Activated naive CD4-positive, alpha-beta T cell treated with anti-CD3 and anti-CD28 coated beads for 36 hours (primary cell): ENCODE measurements at regions of chr7 and their contacts with region 1.

Region 1: GRCh38 chr7:117750612-117751563 is 122.4 kb downstream of the CTTNBP2 start:
- DNase-seq: no peak
- H3K4me3 Mint-ChIP-seq: no peak overlapping the region
- H3K27ac Mint-ChIP-seq: no peak overlapping the region
- H3K4me1 Mint-ChIP-seq: no peaks in the 10 kb centered on the region
- H3K27me3 Mint-ChIP-seq: no peaks in the 10 kb centered on the region

Region 2: DNA sequence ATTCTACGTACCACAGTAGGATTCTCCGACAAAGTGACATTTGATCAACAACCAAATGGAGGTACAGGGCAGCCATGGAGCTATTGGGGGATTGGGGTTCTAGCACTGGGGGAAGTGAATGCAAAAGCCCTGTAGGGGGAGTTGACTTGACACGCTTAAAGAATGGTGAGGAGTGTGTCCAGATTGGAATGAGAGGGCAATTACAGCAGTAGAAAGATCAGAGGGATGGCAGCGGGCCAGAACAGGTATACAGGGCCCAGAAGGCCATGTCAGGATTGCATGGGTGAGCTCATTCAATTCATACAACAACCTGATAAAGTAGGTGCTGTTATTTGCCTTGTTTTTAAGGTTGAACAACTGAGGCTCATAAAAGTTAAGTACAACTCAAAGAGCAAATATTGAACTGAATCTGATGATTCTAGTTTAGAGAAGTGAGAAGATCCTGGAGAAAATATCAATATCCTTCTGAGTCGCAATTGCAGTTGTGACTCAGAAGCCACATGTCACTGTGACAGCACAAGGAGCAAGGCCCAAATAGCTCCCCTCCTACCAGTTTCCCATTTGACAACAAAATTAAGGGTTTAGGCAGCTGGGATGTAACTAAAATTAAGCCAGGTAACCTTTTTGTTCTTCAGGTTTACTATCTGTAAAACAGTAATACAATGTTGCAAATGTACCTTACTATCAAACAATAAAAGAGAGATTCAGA is 150.4 kb after region 1 on chr7:
- CTCF ChIA-PET with region 1: no interaction called
- intact Hi-C with region 1: no loop called
- DNase-seq: no peak
- H3K4me3 Mint-ChIP-seq: no peak overlapping the region
- H3K27ac Mint-ChIP-seq: no peak overlapping the region
- H3K4me1 Mint-ChIP-seq: no peaks in the 10 kb centered on the region
- H3K27me3 Mint-ChIP-seq: no peaks in the 10 kb centered on the region

Region 3: GRCh38 chr7:118104812-118105441 is 354.0 kb after region 1 on chr7:
- CTCF ChIA-PET with region 1: no interaction called
- intact Hi-C with region 1: loop called (anchors 2 kb)
- DNase-seq: no peak
- H3K4me3 Mint-ChIP-seq: no peak overlapping the region
- H3K27ac Mint-ChIP-seq: no peak overlapping the region
- H3K4me1 Mint-ChIP-seq: no peaks in the 10 kb centered on the region
- H3K27me3 Mint-ChIP-seq: peaks cover 1% of the 10 kb centered on the region

Region 4: DNA sequence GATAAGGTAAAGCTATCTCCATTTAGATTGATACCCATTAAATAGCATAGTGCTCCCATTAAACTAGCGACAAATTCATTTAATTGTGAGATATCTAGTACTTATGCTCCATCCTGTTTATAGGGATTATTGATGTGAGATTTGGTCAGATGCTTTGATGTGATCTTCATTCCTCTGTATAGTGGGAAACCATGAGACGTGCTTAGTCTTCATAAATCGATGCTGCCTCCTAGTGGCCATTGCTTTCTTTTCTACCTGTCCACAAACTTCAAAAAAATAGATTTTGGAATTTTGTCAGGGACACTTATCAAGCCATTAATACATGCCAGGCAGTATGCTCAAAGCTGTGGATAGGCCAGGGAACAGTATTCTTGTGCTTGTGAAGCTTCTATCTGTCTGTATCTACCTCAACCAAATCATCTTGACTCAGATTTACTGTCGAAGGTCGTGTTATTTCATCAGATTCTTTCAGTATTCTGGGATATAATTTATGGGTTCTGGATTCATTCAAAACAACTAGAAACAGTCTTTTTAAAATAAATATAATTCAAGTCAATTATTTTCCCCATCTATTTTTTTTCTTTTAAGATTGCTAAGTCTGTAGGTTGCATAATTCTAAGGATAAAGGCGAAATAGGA is 445.1 kb after region 1 on chr7:
- CTCF ChIA-PET with region 1: interaction called, 3 read pairs
- intact Hi-C with region 1: loop called (anchors 2 kb)
- DNase-seq: peak; percentile 76
- H3K4me3 Mint-ChIP-seq: no peak overlapping the region
- H3K27ac Mint-ChIP-seq: no peak overlapping the region
- H3K4me1 Mint-ChIP-seq: peaks cover 2% of the 10 kb centered on the region
- H3K27me3 Mint-ChIP-seq: no peaks in the 10 kb centered on the region